ENCODE measurements at regions of chr10 and their contacts with region 1.

Region 1: DNA sequence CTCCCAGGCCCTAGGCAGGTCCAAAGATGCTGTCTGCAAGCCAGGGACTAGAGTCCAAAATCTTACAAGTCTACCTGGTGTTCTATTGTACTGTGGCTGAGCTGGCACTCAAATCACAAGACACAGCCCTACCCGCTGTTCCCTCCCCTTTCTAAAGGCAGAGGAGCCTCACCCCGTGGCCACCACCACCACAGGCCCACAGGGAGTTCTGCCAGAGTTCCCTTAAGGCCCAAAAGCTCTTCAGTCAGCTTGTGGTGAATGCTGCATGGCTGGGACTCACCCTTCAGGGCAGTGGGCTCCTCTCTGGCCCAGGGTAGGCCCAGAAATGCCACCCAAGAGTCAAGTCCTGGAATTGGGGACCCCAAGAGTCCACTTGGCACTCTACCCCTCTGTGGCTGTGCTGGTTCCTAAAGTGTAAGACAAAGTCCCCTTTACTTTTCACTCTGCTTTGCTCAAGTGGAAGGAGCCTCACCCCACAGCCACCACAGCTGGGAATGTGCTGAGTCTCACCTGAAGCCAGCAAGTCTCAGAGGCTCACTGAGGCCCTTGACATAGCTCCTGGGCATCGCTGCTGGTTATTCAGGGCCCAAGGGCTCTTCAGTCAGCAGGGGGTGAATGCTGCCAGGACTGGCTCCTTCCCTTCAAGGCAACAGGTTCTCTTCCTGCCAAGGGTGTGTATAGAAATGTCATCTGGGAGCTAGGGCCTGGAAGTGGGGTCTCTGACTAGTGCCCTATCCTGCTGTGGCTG is 48.8 kb upstream of the PSAP start:
- DNase-seq: no peak
- ATAC-seq: no peak
- H3K4me3 ChIP-seq: no peak overlapping the region
- H3K27ac ChIP-seq: no peak overlapping the region
- H3K4me1 ChIP-seq: peaks cover 0 to 3% of the 10 kb centered on the region in 2 experiments; a peak in 2 of 5 replicates
- H3K27me3 ChIP-seq: no peaks in the 10 kb centered on the region
- CTCF ChIP-seq: no peak
- EP300 ChIP-seq: no peak
- POLR2A ChIP-seq: no peak
- RAD21 ChIP-seq: no peak

Region 2: GRCh38 chr10:71383972-71384687 is 515.7 kb before region 1 on chr10:
- CTCF ChIA-PET with region 1: interaction called, 15 read pairs
- POLR2A ChIA-PET with region 1: no interaction called
- in situ Hi-C with region 1: no loop called
- intact Hi-C with region 1: loop called (anchors 5 kb)
- DNase-seq: peak; percentile 86 to 92 (median 90)
- ATAC-seq: peak; percentile 98
- H3K4me3 ChIP-seq: no peak overlapping the region
- H3K27ac ChIP-seq: no peak overlapping the region
- H3K4me1 ChIP-seq: peaks cover 3 to 9% of the 10 kb centered on the region in 2 experiments; a peak in 3 of 5 replicates
- H3K27me3 ChIP-seq: peaks cover 5 to 10% of the 10 kb centered on the region in 2 experiments
- CTCF ChIP-seq: peak; percentile 95 to 98 (median 95)
- EP300 ChIP-seq: no peak
- POLR2A ChIP-seq: no peak
- RAD21 ChIP-seq: peak; percentile 82 to 92

Region 3: GRCh38 chr10:71974489-71975021 is 74.7 kb after region 1 on chr10:
- CTCF ChIA-PET with region 1: interaction called, 7 read pairs
- POLR2A ChIA-PET with region 1: no interaction called
- in situ Hi-C with region 1: no loop called
- intact Hi-C with region 1: loop called (anchors 5 kb)
- DNase-seq: no peak
- ATAC-seq: no peak
- H3K4me3 ChIP-seq: no peak overlapping the region
- H3K27ac ChIP-seq: no peak overlapping the region
- H3K4me1 ChIP-seq: peaks cover 3 to 12% of the 10 kb centered on the region in 2 experiments; a peak in 3 of 5 replicates
- H3K27me3 ChIP-seq: peaks cover 28 to 73% of the 10 kb centered on the region in 2 experiments
- CTCF ChIP-seq: no peak
- EP300 ChIP-seq: no peak
- POLR2A ChIP-seq: no peak
- RAD21 ChIP-seq: no peak

Region 4: DNA sequence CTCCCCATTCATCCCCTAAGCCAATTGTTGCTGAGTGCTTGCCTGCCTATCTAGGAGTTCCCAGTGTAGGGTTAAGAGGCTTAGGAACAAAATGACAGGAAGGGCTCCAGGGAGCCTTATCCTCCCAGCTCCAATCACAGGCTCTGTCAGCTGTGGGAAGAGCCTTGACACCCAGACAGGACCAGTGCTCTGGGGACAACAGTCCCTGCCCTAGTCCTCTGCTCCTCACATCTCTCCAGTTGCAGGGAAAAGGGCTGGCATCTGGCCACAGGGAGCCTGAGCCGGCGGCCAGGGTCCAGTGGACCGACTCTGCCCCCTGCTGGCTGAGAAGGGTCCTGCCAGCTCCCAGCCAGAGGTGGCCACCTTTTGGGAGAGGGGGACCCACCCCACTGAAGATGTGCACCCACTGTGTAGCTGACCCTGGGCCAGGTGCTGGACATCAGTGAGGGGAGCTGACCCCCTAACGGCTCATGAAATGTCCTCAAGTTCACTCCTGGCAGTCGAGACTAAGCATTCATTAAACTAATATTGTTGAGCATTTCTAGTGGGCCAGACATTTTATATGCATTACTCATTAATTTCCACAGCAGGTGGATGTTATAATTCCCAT is 437.3 kb after region 1 on chr10:
- CTCF ChIA-PET with region 1: interaction called, 55 read pairs
- POLR2A ChIA-PET with region 1: interaction called, 4 read pairs
- in situ Hi-C with region 1: loop called (anchors 5 kb)
- intact Hi-C with region 1: no loop called
- DNase-seq: peak; percentile 76 to 88 (median 81)
- ATAC-seq: peak; percentile 81
- H3K4me3 ChIP-seq: no peak overlapping the region
- H3K27ac ChIP-seq: no peak overlapping the region
- H3K4me1 ChIP-seq: peaks cover 2 to 36% of the 10 kb centered on the region in 2 experiments; a peak in 2 of 5 replicates
- H3K27me3 ChIP-seq: no peaks in the 10 kb centered on the region
- CTCF ChIP-seq: peak; percentile 91 to 99 (median 93)
- EP300 ChIP-seq: no peak
- POLR2A ChIP-seq: peak; percentile 29; the same call in 1 of the 2 replicates
- RAD21 ChIP-seq: peak; percentile 95 to 97